Activated CD4-positive, alpha-beta T cell treated with anti-CD3 and anti-CD28 coated beads, Interleukin-2, amount 10 ng/mL, durations not matched to agents 7 days and 5 days (primary cell): ENCODE measurements at regions of chr6 and their contacts with region 1.

Region 1: DNA sequence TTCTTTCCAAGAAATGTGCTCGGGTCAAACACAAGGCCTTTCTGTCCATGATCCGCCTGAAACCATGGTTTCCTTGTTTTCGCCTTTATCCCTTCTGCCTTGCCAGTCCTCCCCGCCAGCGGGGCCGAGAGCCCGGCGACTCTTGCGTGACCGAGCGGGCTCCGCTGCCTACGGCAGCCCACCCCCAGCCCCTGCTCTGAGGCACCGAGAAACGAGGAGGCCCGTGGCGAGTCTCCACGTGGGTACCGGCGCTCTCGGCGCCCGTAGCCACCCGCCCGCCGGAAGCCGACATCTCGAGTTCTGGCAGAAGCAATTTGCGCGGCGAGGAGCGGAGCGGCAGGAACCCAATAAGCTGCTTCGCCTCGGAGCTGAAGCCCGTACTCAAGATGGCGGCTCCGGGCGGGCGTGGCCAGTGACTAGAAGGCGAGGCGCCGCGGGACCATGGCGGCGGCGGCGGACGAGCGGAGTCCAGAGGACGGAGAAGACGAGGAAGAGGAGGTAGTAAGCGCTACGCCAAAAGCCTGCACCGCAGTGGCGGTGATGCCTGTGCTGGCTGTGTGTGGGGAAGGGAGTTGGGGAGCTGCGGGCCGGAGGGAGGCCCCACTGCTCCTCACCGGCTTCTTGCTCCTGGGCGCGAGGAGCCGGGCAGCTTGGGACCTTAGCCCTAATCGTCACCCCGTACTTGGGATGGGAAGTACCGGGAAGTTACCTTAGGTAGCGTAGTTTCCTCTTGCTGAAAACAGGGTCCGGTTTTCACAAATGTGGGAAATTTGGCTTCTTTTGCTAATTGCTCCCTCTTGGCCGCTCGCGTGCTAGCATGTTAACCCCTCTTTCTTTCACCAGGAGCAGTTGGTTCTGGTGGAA is at the start of gene GTF3C6:
- DNase-seq: peak; percentile 96
- H3K4me3 Mint-ChIP-seq: peak within 1 kb of the TSS; percentile 99
- H3K27ac Mint-ChIP-seq: peak within 1 kb of the TSS; percentile 100
- H3K4me1 Mint-ChIP-seq: peaks cover 18% of the 10 kb centered on the region
- H3K27me3 Mint-ChIP-seq: peaks cover under 1% of the 10 kb centered on the region
- total RNA-seq, gene GTF3C6: 85.9 to 98.7 TPM

Region 2: GRCh38 chr6:110815217-110816109 is 143.1 kb before region 1 on chr6 and contains the start of gene CDK19:
- CTCF ChIA-PET with region 1: no interaction called
- POLR2A ChIA-PET with region 1: interaction called, 12 read pairs
- DNase-seq: peak; percentile 99
- H3K4me3 Mint-ChIP-seq: peak within 1 kb of the TSS; percentile 99
- H3K27ac Mint-ChIP-seq: peak within 1 kb of the TSS; percentile 99
- H3K4me1 Mint-ChIP-seq: peaks cover 41% of the 10 kb centered on the region
- H3K27me3 Mint-ChIP-seq: no peaks in the 10 kb centered on the region
- total RNA-seq, gene CDK19: 26.5 to 27.3 TPM

Region 3: GRCh38 chr6:110859335-110859792 is 99.2 kb before region 1 on chr6:
- CTCF ChIA-PET with region 1: no interaction called
- POLR2A ChIA-PET with region 1: no interaction called
- DNase-seq: no peak
- H3K4me3 Mint-ChIP-seq: no peak overlapping the region
- H3K27ac Mint-ChIP-seq: peak overlapping the region; percentile 69
- H3K4me1 Mint-ChIP-seq: peaks cover 16% of the 10 kb centered on the region
- H3K27me3 Mint-ChIP-seq: no peaks in the 10 kb centered on the region

Region 4: DNA sequence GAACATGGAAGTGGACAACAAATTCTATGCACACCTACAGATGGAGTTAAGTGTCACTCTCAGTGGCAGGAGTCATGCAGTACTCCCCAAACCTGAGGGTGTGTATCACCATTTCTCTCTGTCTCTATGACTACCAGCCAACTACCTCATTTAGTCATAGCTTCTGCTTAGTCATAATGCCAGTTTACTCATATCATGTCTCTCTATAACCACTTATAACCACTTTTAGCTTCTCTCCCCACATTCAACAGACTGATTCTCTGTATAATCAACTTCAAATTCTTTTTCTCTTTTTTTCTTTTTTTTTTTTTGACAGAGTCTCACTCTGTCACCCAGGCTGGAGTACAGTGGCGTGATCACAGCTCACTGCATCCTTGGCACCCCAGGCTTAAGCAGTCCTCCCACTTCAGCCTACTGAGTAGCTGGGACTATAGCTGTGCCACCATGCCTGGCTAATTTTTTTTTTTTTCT is 13.8 kb before region 1 on chr6:
- CTCF ChIA-PET with region 1: interaction called, 16 read pairs
- POLR2A ChIA-PET with region 1: no interaction called
- DNase-seq: peak; percentile 49
- H3K4me3 Mint-ChIP-seq: peak overlapping the region; percentile 30
- H3K27ac Mint-ChIP-seq: peak overlapping the region; percentile 36
- H3K4me1 Mint-ChIP-seq: peaks cover 10% of the 10 kb centered on the region
- H3K27me3 Mint-ChIP-seq: no peaks in the 10 kb centered on the region

Region 5: DNA sequence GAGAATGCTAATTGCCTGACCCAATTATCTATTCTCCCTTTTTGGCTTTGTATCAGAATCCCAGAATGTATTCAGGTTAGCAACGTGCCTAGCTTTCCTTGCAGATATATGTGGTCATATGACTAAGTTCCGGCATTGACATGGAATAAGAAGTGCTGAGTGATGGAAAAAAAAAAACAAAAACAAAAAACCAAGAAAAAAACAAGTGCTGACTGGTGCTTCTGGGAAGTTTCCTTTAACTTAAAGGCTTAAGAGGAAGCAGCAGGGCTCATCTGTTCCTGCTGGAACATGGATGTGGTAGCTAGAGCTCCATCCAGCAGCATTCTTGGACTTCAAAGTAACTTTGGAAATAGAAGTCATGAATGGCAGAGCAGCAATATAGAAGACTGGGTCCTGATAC is 12.9 kb after region 1 on chr6:
- CTCF ChIA-PET with region 1: interaction called, 10 read pairs
- POLR2A ChIA-PET with region 1: interaction called, 12 read pairs
- DNase-seq: no peak
- H3K4me3 Mint-ChIP-seq: no peak overlapping the region
- H3K27ac Mint-ChIP-seq: no peak overlapping the region
- H3K4me1 Mint-ChIP-seq: no peaks in the 10 kb centered on the region
- H3K27me3 Mint-ChIP-seq: no peaks in the 10 kb centered on the region